PC-9 (cell line): ENCODE measurements at regions of chr1 and their contacts with region 1.

Region 1: DNA sequence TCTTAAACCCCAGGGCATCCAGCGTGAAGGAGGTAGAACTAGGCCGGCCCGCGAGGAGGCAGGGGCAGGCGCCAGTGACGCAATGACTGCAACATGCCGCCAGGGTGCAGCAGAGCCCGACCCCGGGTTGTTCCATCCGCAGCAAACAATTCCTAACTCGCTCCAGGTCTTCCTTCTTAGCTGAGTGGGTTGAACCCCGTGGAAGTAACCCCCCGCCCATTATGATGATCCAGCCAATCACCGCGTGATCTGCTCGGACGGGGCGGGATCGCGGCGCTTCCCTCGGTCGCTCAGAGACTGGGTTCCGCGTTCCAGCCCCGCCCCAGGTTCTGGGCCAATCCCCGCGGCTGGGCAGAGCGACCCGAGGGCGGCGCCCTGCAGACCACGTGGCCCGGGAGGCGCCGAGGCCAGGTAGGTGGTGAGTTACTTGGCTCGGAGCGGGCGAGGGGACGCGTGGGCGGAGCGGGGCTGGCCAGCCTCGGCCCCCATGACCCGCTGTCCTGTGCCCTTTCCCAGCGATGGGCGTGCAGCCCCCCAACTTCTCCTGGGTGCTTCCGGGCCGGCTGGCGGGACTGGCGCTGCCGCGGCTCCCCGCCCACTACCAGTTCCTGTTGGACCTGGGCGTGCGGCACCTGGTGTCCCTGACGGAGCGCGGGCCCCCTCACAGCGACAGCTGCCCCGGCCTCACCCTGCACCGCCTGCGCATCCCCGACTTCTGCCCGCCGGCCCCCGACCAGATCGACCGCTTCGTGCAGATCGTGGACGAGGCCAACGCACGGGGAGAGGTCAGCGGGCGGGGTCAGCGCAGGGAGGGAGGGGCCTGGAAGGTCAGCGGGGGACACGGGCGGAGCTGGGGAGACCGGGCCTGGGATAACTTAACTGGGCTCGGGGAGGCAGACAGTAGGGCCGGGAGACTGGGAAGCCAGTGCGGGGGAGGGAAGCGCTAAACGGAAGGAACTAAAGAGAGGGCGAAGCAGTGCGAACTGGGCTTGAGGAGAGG is at the start of gene DUSP23:
- DNase-seq: peak; percentile 93 to 98
- H3K4me3 ChIP-seq: peak within 1 kb of the TSS; percentile 77
- H3K27ac ChIP-seq: no peak within 1 kb of the TSS; the same call in 1 of the 2 replicates
- H3K4me1 ChIP-seq: peaks cover 4% of the 10 kb centered on the region; the same call in 1 of the 2 replicates
- H3K27me3 ChIP-seq: no peaks in the 10 kb centered on the region
- CTCF ChIP-seq: peak; percentile 82
- total RNA-seq, gene DUSP23: 33.1 and 50.4 TPM in 2 replicates

Region 2: DNA sequence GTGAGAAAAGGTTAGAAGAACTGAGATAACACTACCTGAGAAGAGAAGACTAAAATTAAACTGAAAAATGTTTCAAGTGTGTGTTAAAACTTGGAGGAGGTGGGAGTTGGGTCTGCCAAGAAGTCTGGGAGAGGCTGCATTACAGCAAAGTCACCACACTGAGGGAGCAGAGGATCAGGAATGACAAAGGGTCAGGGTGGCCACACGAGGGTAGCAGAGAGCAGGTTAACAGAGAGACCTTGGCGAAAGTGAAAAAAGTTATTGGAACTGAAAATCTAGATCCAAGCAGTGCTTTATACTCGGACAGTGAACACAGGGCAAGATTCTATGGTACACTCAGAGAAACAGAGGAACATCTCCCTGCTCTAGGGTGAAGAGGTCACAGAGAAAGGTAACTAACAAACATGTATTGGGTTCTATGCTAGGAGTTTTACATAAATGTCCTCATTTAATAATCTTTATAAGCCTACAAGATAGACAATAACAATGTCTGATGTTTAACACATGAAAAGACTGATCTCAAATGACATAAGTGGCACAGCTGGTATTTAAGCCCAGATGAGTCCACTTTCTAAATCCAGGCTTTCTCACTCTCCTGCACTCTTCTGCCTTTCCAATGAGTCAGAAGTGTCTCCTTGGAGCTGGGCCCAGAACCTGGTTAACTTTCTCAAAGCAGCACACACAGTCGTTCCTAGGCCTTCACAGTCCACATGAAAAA is 619.7 kb before region 1 on chr1:
- CTCF ChIA-PET with region 1: no interaction called
- POLR2A ChIA-PET with region 1: no interaction called
- intact Hi-C with region 1: loop called (anchors 2 kb)
- DNase-seq: peak; percentile 41 to 60
- H3K4me3 ChIP-seq: no peak overlapping the region
- H3K27ac ChIP-seq: no peak overlapping the region
- H3K4me1 ChIP-seq: no peaks in the 10 kb centered on the region
- H3K27me3 ChIP-seq: peaks cover 12% of the 10 kb centered on the region
- CTCF ChIP-seq: peak; percentile 90

Region 3: GRCh38 chr1:159737238-159737916 is 43.5 kb before region 1 on chr1:
- CTCF ChIA-PET with region 1: no interaction called
- POLR2A ChIA-PET with region 1: no interaction called
- intact Hi-C with region 1: no loop called
- DNase-seq: no peak
- H3K4me3 ChIP-seq: no peak overlapping the region
- H3K27ac ChIP-seq: no peak overlapping the region
- H3K4me1 ChIP-seq: no peaks in the 10 kb centered on the region
- H3K27me3 ChIP-seq: 0 out of 2 replicates have a peak, but pooled peaks cover 4% of the 10 kb centered on the region
- CTCF ChIP-seq: no peak

Region 4: DNA sequence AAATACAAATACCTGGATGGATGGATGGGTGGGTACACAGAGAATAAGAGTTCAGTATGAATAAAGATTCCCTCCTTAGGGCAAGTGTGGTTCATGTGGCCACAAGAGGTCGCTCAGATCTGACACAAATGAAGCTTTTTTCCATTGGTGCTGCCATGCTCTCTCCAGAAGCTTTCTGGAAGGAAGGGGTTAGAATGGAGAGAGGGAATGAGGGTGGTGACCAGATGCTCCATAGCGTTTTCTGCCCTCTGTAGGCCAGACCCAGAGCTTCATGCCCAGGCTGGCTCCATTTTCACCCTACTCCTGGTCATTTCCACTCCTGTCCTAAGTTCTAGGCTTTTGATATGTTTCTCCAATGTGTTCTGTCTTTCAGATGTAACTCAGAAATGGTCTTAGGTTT is 18.0 kb after region 1 on chr1:
- CTCF ChIA-PET with region 1: interaction called, 6 read pairs
- POLR2A ChIA-PET with region 1: no interaction called
- intact Hi-C with region 1: loop called (anchors 1 kb)
- DNase-seq: peak; percentile 61 to 70
- H3K4me3 ChIP-seq: no peak overlapping the region
- H3K27ac ChIP-seq: no peak overlapping the region
- H3K4me1 ChIP-seq: no peaks in the 10 kb centered on the region
- H3K27me3 ChIP-seq: peaks cover 19% of the 10 kb centered on the region
- CTCF ChIP-seq: peak; percentile 74

Region 5: GRCh38 chr1:159891275-159892157 is 110.6 kb after region 1 on chr1:
- CTCF ChIA-PET with region 1: interaction called, 5 read pairs
- POLR2A ChIA-PET with region 1: no interaction called
- intact Hi-C with region 1: loop called (anchors 1 kb)
- DNase-seq: peak; percentile 75 to 85
- H3K4me3 ChIP-seq: no peak overlapping the region
- H3K27ac ChIP-seq: no peak overlapping the region
- H3K4me1 ChIP-seq: peaks cover 26% of the 10 kb centered on the region
- H3K27me3 ChIP-seq: no peaks in the 10 kb centered on the region
- CTCF ChIP-seq: peak; percentile 98

Region 6: DNA sequence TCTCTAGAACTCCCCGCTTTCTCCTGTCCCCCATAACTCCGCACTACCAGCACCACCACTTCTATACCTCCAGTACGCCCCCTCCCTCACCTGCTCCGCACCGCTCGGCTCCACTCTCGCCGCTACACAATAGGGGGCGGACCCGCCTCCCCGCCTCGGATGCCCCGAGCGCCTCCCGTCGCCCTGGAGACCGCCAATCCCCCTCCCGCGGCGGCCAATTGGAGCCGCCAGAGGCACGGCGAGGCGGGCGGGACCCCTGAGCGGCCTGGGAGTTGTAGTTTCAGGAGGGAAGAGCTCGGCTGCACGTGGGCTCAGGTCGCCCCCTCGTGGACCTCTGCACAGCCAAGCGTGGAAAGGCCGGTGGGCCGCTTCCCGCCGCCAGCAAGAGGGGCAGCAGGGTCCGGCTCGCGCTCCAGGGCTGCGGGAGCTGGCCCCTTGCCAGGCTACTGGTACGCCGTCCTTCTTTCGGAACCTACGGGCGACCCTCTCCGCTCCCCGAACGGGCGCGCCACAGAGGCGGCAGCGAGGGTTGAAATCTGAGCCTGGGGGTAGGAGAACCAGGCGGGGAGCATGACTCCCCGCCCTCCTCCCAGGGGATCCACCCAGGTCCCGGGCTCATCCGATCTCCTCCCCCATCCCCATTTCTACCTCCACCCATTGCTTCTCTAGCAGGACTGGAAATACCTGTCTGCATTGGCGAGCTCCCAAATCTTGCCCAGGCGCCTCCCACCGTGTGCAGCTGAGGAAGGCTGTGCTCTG is 164.8 kb after region 1 on chr1 and contains the start of gene IGSF9:
- CTCF ChIA-PET with region 1: interaction called, 3 read pairs
- POLR2A ChIA-PET with region 1: no interaction called
- intact Hi-C with region 1: loop called (anchors 5 kb)
- DNase-seq: peak; percentile 90 to 94
- H3K4me3 ChIP-seq: peak within 1 kb of the TSS; percentile 76
- H3K27ac ChIP-seq: peak within 1 kb of the TSS; percentile 53
- H3K4me1 ChIP-seq: peaks cover 40% of the 10 kb centered on the region
- H3K27me3 ChIP-seq: no peaks in the 10 kb centered on the region
- CTCF ChIP-seq: peak; percentile 61
- total RNA-seq, gene IGSF9: 22.9 and 23.4 TPM in 2 replicates

Region 7: GRCh38 chr1:160031365-160032164 is 250.7 kb after region 1 on chr1 and contains the start of gene PIGM:
- CTCF ChIA-PET with region 1: no interaction called
- POLR2A ChIA-PET with region 1: no interaction called
- intact Hi-C with region 1: loop called (anchors 1 kb)
- DNase-seq: peak; percentile 94 to 95
- H3K4me3 ChIP-seq: peak within 1 kb of the TSS; percentile 83
- H3K27ac ChIP-seq: peak within 1 kb of the TSS; percentile 37; the same call in 1 of the 2 replicates
- H3K4me1 ChIP-seq: peaks cover 19% of the 10 kb centered on the region
- H3K27me3 ChIP-seq: no peaks in the 10 kb centered on the region
- CTCF ChIP-seq: no peak
- total RNA-seq, gene PIGM: 3.3 and 4.0 TPM in 2 replicates